ENCODE measurements at regions of chr10 and their contacts with region 1.

Region 1: GRCh38 chr10:7687228-7687907 is 15.7 kb upstream of the ITIH2 start:
- DNase-seq: peak; percentile 93 to 94
- H3K4me3 ChIP-seq: no peak overlapping the region
- H3K4me3 Mint-ChIP-seq: peak overlapping the region; percentile 66
- H3K27ac Mint-ChIP-seq: peak overlapping the region; percentile 75
- H3K4me1 ChIP-seq: peaks cover 6% of the 10 kb centered on the region
- H3K4me1 Mint-ChIP-seq: peaks cover 16% of the 10 kb centered on the region
- H3K27me3 ChIP-seq: no peaks in the 10 kb centered on the region
- H3K27me3 Mint-ChIP-seq: no peaks in the 10 kb centered on the region
- CTCF ChIP-seq: peak; percentile 96 to 98

Region 2: GRCh38 chr10:7533657-7534479 is 153.5 kb before region 1 on chr10:
- CTCF ChIA-PET with region 1: interaction called, 66 read pairs
- POLR2A ChIA-PET with region 1: no interaction called
- intact Hi-C with region 1: loop called (anchors 1 kb)
- DNase-seq: no peak
- H3K4me3 ChIP-seq: no peak overlapping the region
- H3K4me3 Mint-ChIP-seq: no peak overlapping the region
- H3K27ac Mint-ChIP-seq: no peak overlapping the region
- H3K4me1 ChIP-seq: no peaks in the 10 kb centered on the region; the same call in 1 of the 2 replicates
- H3K4me1 Mint-ChIP-seq: peaks cover 6% of the 10 kb centered on the region
- H3K27me3 ChIP-seq: no peaks in the 10 kb centered on the region
- H3K27me3 Mint-ChIP-seq: no peaks in the 10 kb centered on the region
- CTCF ChIP-seq: no peak

Region 3: DNA sequence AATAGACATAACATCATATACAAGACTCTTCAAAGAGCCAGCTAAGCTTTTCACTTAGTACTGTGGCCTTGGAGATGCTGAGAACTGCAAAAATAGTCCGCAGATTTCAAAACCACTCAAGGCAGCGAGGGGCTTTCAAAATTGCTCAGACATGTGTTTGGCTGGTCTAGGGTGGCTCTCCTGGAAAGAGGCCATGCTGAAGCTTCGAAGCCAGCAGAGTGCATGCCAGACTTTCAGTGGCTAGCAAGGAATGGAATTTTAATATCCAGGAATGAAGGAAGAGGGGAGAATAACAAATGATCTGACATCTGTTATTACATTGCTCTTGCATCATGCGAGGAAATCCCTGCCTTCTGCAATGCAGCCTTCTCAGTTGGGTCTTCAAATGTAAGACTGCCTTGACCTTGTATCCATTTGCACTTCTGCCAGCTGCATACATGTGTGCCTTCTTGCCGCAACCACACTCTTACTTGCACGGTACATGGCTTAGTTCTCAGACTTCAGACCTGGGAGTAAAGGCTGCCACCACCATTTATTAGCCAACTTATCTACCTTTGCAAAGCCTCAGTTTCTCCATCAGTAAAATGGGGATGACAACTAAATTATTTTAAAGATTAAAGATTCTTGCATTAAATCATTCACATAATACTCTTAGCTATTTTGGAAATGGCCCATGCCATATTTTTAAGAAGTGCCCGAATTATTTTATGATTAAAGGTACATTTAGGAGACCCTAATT is 76.5 kb before region 1 on chr10:
- CTCF ChIA-PET with region 1: interaction called, 3 read pairs
- POLR2A ChIA-PET with region 1: no interaction called
- intact Hi-C with region 1: loop called (anchors 2 kb)
- DNase-seq: peak in 1 of 2 experiments; percentile 46
- H3K4me3 ChIP-seq: no peak overlapping the region
- H3K4me3 Mint-ChIP-seq: no peak overlapping the region
- H3K27ac Mint-ChIP-seq: no peak overlapping the region
- H3K4me1 ChIP-seq: no peaks in the 10 kb centered on the region
- H3K4me1 Mint-ChIP-seq: peaks cover 8% of the 10 kb centered on the region
- H3K27me3 ChIP-seq: no peaks in the 10 kb centered on the region
- H3K27me3 Mint-ChIP-seq: peaks cover 10% of the 10 kb centered on the region
- CTCF ChIP-seq: no peak

Region 4: GRCh38 chr10:7659560-7659959 is 27.8 kb before region 1 on chr10:
- CTCF ChIA-PET with region 1: interaction called, 6 read pairs
- POLR2A ChIA-PET with region 1: interaction called, 3 read pairs
- intact Hi-C with region 1: loop called (anchors 2 kb)
- DNase-seq: peak in 1 of 2 experiments; percentile 42
- H3K4me3 ChIP-seq: no peak overlapping the region
- H3K4me3 Mint-ChIP-seq: no peak overlapping the region
- H3K27ac Mint-ChIP-seq: peak overlapping the region; percentile 34
- H3K4me1 ChIP-seq: peaks cover 33% of the 10 kb centered on the region
- H3K4me1 Mint-ChIP-seq: peaks cover 16% of the 10 kb centered on the region
- H3K27me3 ChIP-seq: no peaks in the 10 kb centered on the region
- H3K27me3 Mint-ChIP-seq: no peaks in the 10 kb centered on the region
- CTCF ChIP-seq: no peak

Region 5: DNA sequence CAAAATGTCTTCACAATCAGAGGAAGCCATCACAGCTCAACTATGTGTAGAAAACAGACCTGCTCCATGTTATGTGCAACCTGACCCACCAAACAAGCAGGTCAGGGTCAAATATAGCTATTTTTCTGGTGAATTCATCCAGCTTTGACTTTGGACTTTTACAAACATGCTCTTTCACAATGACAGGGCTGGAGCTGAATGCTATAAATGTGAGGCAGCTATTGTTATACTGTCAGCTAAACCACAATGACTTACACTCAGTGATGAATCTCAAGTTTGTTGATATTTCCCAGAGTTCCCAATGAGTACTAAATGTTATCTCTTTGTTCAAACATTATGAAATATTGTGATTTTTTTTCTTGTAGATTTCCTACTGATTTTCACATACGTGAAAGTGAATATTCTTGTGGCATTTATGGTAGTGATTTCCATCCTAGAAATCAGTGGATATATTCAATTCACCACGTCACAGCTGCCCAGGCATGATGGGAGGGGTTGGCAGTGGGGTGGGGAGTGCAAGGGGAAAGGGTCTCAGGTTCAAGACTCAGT is 13.3 kb after region 1 on chr10:
- CTCF ChIA-PET with region 1: interaction called, 24 read pairs
- POLR2A ChIA-PET with region 1: no interaction called
- intact Hi-C with region 1: loop called (anchors 1 kb)
- DNase-seq: peak; percentile 61 to 80
- H3K4me3 ChIP-seq: no peak overlapping the region
- H3K4me3 Mint-ChIP-seq: no peak overlapping the region
- H3K27ac Mint-ChIP-seq: peak overlapping the region; percentile 52
- H3K4me1 ChIP-seq: peaks cover 8% of the 10 kb centered on the region
- H3K4me1 Mint-ChIP-seq: no peaks in the 10 kb centered on the region
- H3K27me3 ChIP-seq: no peaks in the 10 kb centered on the region
- H3K27me3 Mint-ChIP-seq: no peaks in the 10 kb centered on the region
- CTCF ChIP-seq: no peak

Region 6: DNA sequence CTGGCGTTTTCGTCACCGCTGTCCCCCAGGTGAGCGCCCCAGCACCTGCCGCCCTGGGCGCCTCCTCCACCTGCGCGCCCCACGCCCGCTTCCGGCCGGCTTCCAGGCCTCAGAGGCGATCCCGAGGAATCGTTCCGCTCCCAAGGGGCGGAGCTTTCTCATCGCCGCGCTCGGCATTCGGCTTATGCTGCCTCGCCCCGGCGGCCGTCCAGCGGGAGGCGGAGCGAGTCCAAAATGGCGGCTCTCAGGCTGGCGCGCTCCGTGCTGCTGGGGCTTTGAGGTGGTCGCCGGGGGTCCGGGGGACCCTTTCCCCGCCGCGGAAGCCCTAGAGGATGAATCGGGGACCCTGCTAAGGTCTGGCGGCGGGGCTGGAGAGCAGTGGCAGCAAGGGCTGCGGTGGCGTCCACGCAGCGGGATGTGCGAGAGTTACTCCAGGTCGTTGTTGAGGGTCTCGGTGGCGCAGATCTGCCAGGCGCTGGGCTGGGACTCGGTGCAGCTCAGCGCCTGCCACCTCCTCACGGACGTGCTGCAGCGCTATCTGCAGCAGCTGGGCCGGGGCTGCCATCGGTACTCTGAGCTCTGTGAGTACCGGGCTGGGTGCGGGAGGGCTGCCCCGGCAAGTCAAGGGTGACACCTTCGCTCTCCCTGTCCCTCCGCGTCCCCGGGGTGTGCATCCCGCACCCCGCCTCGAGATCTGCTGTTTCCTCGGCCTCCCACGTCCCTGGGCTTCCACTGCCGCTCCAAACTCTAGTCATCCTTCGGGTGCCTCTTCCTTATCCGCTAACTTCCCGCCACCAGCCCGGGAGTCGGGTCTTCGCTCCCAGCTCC is 131.1 kb after region 1 on chr10 and contains the start of gene TAF3:
- CTCF ChIA-PET with region 1: interaction called, 12 read pairs
- POLR2A ChIA-PET with region 1: no interaction called
- intact Hi-C with region 1: loop called (anchors 5 kb)
- DNase-seq: peak; percentile 94 to 99
- H3K4me3 ChIP-seq: peak within 1 kb of the TSS; percentile 95
- H3K4me3 Mint-ChIP-seq: peak within 1 kb of the TSS; percentile 84
- H3K27ac Mint-ChIP-seq: peak within 1 kb of the TSS; percentile 72
- H3K4me1 ChIP-seq: peaks cover 4% of the 10 kb centered on the region; the same call in 1 of the 2 replicates
- H3K4me1 Mint-ChIP-seq: peaks cover 8% of the 10 kb centered on the region
- H3K27me3 ChIP-seq: no peaks in the 10 kb centered on the region
- H3K27me3 Mint-ChIP-seq: no peaks in the 10 kb centered on the region
- CTCF ChIP-seq: no peak
- total RNA-seq, gene TAF3: 28.9 and 30.6 TPM in 2 replicates

Region 7: DNA sequence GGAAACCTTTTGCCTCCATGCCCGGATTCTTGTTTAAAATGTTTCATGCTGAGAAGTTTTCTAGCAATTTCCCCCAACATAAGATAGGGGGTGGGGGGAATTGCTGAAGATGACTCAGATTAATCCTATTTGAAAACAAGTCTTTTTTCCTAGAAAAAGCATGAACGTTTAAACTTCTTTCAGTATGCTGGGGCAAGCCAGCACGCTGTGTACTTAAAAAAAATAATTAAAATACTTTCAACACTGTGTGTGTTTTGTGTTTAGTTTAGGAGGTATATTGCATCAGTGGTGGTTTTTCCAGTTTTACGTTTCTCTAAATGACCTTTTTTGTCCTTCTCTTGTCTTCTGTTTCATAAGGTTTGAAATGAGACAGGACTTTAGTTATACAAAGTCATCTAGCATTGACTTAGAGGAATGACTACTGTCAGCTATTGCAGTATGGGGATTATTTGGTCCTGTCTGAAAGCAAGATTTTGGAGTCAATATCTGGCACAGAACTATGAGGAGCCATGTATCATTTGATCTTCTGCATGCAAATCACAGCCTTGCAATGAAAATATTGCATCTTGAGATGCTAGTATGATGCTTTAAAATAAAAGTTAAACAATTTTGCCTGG is 663.1 kb after region 1 on chr10:
- CTCF ChIA-PET with region 1: no interaction called
- POLR2A ChIA-PET with region 1: no interaction called
- intact Hi-C with region 1: no loop called
- DNase-seq: peak in 1 of 2 experiments; percentile 61
- H3K4me3 ChIP-seq: no peak overlapping the region
- H3K4me3 Mint-ChIP-seq: peak overlapping the region; percentile 44
- H3K27ac Mint-ChIP-seq: peak overlapping the region; percentile 60
- H3K4me1 ChIP-seq: peaks cover 55% of the 10 kb centered on the region
- H3K4me1 Mint-ChIP-seq: peaks cover 43% of the 10 kb centered on the region
- H3K27me3 ChIP-seq: no peaks in the 10 kb centered on the region
- H3K27me3 Mint-ChIP-seq: no peaks in the 10 kb centered on the region
- CTCF ChIP-seq: no peak

Measured in Caco-2 (cell line).